ENCODE measurements at regions of chrX and their contacts with region 1.

Region 1: GRCh38 chrX:129905787-129906580 is at the start of gene UTP14A:
- DNase-seq: peak; percentile 81
- H3K4me3 Mint-ChIP-seq: peak within 1 kb of the TSS; percentile 96
- H3K27ac Mint-ChIP-seq: peak within 1 kb of the TSS; percentile 92
- H3K4me1 Mint-ChIP-seq: peaks cover 11% of the 10 kb centered on the region
- H3K27me3 Mint-ChIP-seq: no peaks in the 10 kb centered on the region
- total RNA-seq, gene UTP14A: 59.3 and 62.4 TPM in 2 replicates

Region 2: GRCh38 chrX:129637217-129638109 is 268.5 kb before region 1 on chrX:
- intact Hi-C with region 1: loop called (anchors 10 kb)
- DNase-seq: peak; percentile 48
- H3K4me3 Mint-ChIP-seq: no peak overlapping the region
- H3K27ac Mint-ChIP-seq: no peak overlapping the region
- H3K4me1 Mint-ChIP-seq: no peaks in the 10 kb centered on the region
- H3K27me3 Mint-ChIP-seq: no peaks in the 10 kb centered on the region

Region 3: DNA sequence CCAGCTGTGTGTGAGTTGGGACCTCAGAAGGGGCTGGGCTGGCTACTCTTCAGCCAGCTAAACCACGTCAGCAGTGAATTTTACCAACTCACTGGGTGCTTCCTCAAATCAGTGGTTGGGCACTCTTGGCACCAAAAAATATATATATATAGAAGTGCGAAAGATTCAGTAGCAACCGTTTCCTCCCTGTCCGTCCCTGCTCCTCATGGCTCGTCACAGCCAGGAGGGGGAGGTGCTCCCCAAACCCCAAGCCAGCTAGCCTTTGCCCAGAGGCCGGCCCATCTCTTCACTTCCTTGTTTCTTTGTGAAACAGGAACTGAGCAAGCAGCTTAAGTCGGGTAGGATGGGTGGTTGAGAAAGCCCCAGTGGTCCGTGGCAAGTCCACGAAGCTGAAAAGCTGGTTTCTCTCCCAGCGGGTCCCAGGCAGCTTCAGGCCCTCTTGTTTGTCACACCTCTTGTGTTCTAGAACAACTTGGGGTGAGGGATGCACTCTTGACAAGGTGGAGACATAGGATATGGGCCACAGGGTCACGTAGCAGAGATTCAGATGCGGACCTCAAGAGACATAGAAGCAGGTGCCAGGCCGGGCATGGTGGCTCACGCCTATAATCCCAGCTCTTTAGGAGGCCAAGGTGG is 133.1 kb before region 1 on chrX:
- intact Hi-C with region 1: loop called (anchors 2 kb)
- DNase-seq: peak; percentile 32
- H3K4me3 Mint-ChIP-seq: peak overlapping the region; percentile 37
- H3K27ac Mint-ChIP-seq: peak overlapping the region; percentile 95
- H3K4me1 Mint-ChIP-seq: peaks cover 50% of the 10 kb centered on the region
- H3K27me3 Mint-ChIP-seq: no peaks in the 10 kb centered on the region

Region 4: GRCh38 chrX:129818123-129818522 is 87.9 kb before region 1 on chrX:
- intact Hi-C with region 1: no loop called
- DNase-seq: no peak
- H3K4me3 Mint-ChIP-seq: no peak overlapping the region
- H3K27ac Mint-ChIP-seq: no peak overlapping the region
- H3K4me1 Mint-ChIP-seq: peaks cover 5% of the 10 kb centered on the region
- H3K27me3 Mint-ChIP-seq: no peaks in the 10 kb centered on the region

Region 5: GRCh38 chrX:129843459-129844306 is 62.3 kb before region 1 on chrX and contains the start of gene ZDHHC9:
- intact Hi-C with region 1: loop called (anchors 1 kb)
- DNase-seq: peak; percentile 78
- H3K4me3 Mint-ChIP-seq: peak within 1 kb of the TSS; percentile 93
- H3K27ac Mint-ChIP-seq: peak within 1 kb of the TSS; percentile 88
- H3K4me1 Mint-ChIP-seq: peaks cover 28% of the 10 kb centered on the region
- H3K27me3 Mint-ChIP-seq: peaks cover 4% of the 10 kb centered on the region
- total RNA-seq, gene ZDHHC9: 13.6 and 14.2 TPM in 2 replicates

Region 6: GRCh38 chrX:129931411-129932015 is 25.5 kb after region 1 on chrX:
- intact Hi-C with region 1: loop called (anchors 2 kb)
- DNase-seq: peak; percentile 52
- H3K4me3 Mint-ChIP-seq: peak overlapping the region; percentile 81
- H3K27ac Mint-ChIP-seq: peak overlapping the region; percentile 80
- H3K4me1 Mint-ChIP-seq: peaks cover 5% of the 10 kb centered on the region
- H3K27me3 Mint-ChIP-seq: peaks cover 9% of the 10 kb centered on the region

Region 7: GRCh38 chrX:130165703-130166502 is 259.9 kb after region 1 on chrX and contains the start of gene AIFM1:
- intact Hi-C with region 1: loop called (anchors 5 kb)
- DNase-seq: peak; percentile 86
- H3K4me3 Mint-ChIP-seq: peak within 1 kb of the TSS; percentile 95
- H3K27ac Mint-ChIP-seq: peak within 1 kb of the TSS; percentile 98
- H3K4me1 Mint-ChIP-seq: peaks cover 20% of the 10 kb centered on the region
- H3K27me3 Mint-ChIP-seq: no peaks in the 10 kb centered on the region
- total RNA-seq, gene AIFM1: 46.0 and 50.2 TPM in 2 replicates

Region 8: DNA sequence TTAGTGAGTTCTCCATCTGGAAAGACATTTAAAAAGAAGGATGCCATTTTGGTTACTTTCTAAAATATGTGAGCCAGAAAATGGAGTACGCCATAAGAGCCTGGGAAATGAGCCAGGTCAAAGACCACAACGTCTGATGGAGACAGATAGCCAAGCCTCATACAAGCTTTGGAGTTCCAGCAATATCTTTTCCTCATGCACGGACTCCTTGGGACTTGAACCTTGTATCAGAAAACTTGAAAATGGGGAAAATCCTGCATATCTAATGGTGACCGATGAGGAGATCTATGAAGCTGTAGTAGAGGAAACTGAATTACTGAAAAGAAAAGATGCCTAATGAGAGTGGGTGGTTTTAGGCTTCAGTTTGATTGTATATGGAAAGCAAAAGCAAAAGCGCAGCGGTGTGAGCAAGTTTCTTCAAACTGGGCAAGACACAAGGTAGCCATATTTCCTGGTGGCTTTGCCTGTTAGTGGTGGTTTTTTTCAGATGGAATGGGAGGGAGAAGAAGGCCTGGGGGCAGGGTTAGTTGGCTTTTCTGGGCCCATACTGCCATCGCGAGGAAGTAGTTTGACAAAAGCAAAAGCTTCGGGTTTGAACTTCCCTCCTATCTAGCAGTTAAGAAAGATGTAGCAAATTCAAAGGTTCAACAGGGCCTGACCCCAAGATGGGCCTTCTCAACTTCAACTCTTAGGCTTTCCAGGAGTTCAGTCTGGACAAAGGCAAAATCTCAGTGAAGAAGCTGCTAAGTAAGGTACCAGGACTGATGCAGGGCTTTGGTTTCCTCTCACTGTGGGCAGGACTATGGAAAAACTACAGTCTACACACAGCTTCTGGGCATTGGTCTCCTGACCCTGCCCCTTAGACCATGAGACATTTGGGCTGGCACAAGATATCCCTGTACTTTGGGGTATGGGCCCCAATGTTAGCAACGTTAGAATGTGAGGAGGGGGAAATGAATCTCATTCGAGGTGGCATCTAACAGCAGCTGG is 1907.1 kb after region 1 on chrX:
- intact Hi-C with region 1: loop called (anchors 2 kb)
- DNase-seq: peak; percentile 63
- H3K4me3 Mint-ChIP-seq: peak overlapping the region; percentile 76
- H3K27ac Mint-ChIP-seq: peak overlapping the region; percentile 89
- H3K4me1 Mint-ChIP-seq: peaks cover 36% of the 10 kb centered on the region
- H3K27me3 Mint-ChIP-seq: no peaks in the 10 kb centered on the region